Psoas muscle (tissue), 8 donors: ENCODE measurements at regions of chr13 and their contacts with region 1.

Region 1: GRCh38 chr13:26985285-26985878 is 186.2 kb downstream of the USP12 start:
- DNase-seq: no peak
- ATAC-seq: peak; percentile 85 to 96 (median 88)
- H3K4me3 ChIP-seq: no peak overlapping the region
- H3K27ac ChIP-seq: no peak overlapping the region
- H3K4me1 ChIP-seq: no peaks in the 10 kb centered on the region
- H3K27me3 ChIP-seq: peaks cover 0 to 2% (median 0%) of the 10 kb centered on the region in 3 donors
- CTCF ChIP-seq: peak; percentile 86

Region 2: DNA sequence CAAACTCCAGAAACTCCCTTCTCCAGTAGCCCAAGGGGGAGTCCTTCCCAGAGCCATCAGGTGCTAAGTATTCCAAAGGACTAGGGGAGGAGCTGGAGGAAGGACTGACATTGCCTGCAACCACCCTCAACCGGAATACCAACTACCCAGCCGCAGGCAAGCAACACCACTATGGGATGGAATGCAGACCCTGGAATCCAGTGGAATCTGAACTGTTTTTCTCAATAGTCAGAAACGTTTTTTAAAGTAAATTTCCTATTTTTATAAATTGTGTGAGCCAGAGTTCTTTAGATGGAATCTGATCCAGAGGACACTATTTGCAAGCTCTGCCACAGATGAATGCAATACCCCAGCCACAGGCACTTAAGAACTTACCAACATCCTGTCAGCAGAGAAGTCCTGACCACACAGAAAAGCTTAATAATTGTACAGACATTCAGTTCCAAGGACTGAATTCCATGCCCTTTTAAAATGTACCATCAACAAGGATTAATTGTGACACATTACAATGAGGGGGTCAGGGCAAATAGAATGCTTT is 94.1 kb after region 1 on chr13:
- intact Hi-C with region 1: no loop called
- DNase-seq: no peak
- ATAC-seq: peak in 3 of 4 donors; percentile 19 to 68 (median 52)
- H3K4me3 ChIP-seq: no peak overlapping the region
- H3K27ac ChIP-seq: no peak overlapping the region
- H3K4me1 ChIP-seq: peaks cover 10% of the 10 kb centered on the region
- H3K27me3 ChIP-seq: no peaks in the 10 kb centered on the region
- CTCF ChIP-seq: no peak

Region 3: DNA sequence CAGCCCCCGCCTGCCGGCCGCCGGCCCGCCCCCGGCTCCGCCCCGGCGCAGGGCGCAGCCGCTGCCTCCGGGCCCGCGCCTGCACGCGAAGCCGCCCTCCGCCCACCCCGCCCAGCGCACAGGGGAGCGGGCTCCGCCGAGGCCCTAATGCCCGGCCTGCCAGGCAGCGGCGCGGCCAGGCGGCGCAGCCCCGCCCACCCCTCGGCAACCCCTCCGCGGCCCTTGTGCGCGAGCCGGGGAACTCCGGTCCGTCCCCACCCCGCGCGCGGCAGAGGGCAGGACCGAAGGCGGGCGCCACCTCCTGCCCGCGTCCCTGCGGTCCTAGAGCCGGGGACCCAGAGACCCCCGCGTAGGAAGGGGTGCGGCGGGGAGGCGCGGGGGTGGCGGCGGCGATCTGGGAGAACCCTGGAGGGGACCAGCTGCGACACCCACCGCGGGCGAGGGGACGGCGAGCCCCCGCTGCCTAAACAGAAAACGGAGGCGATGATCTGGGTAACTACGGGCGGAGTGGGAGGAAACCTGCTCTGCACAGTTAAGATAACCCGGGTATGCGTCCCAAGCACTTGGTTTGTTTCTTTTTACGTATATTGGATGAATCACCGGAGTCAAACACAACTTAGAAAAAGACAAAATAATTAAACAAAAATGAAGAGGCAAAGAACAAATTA is 186.6 kb after region 1 on chr13:
- intact Hi-C with region 1: loop called (anchors 5 to 10 kb)
- DNase-seq: peak; percentile 95 to 97
- ATAC-seq: peak; percentile 96 to 98 (median 97)
- H3K4me3 ChIP-seq: peak overlapping the region; percentile 86
- H3K27ac ChIP-seq: peak overlapping the region; percentile 90
- H3K4me1 ChIP-seq: peaks cover 31% of the 10 kb centered on the region
- H3K27me3 ChIP-seq: no peaks in the 10 kb centered on the region
- CTCF ChIP-seq: peak; percentile 18

Region 4: GRCh38 chr13:27203854-27204253 is 218.5 kb after region 1 on chr13:
- intact Hi-C with region 1: loop called (anchors 5 to 10 kb)
- DNase-seq: no peak
- ATAC-seq: peak in 1 of 4 donors; percentile 52
- H3K4me3 ChIP-seq: no peak overlapping the region
- H3K27ac ChIP-seq: no peak overlapping the region
- H3K4me1 ChIP-seq: no peaks in the 10 kb centered on the region
- H3K27me3 ChIP-seq: no peaks in the 10 kb centered on the region
- CTCF ChIP-seq: no peak

Region 5: DNA sequence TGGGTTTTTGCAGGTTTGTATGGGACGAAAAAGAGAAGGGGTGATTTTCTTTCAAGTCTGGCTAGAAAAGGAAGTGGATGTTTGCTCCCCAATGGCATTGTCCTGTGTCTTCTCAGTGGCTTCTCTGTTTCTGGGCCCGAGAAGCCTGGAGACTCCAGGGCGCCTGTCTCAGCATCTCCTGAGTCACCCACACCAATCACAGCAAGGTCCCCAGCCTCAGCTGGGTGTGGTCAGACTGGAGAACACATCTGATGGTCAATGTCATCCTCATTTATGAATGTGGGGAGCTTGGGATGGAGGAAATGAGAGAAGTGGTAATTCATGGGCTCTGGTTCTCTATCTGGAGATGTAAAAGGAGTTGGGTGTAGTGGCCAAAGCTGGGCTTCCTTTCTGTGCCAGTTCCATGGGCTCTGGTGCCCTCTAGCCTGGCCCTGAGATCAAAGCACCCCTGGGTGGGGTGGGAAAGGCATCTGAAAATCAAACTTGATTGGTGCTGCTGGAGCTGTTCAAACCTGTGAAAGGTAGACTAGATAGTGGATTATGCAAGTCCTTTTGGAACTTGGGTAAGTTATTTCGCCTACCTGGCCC is 298.6 kb after region 1 on chr13:
- intact Hi-C with region 1: loop called (anchors 5 to 10 kb)
- DNase-seq: no peak
- ATAC-seq: peak in 3 of 4 donors; percentile 36 to 53 (median 48)
- H3K4me3 ChIP-seq: no peak overlapping the region
- H3K27ac ChIP-seq: no peak overlapping the region
- H3K4me1 ChIP-seq: no peaks in the 10 kb centered on the region
- H3K27me3 ChIP-seq: peaks cover 0 to 3% (median 2%) of the 10 kb centered on the region in 3 donors
- CTCF ChIP-seq: peak; percentile 29

Region 6: DNA sequence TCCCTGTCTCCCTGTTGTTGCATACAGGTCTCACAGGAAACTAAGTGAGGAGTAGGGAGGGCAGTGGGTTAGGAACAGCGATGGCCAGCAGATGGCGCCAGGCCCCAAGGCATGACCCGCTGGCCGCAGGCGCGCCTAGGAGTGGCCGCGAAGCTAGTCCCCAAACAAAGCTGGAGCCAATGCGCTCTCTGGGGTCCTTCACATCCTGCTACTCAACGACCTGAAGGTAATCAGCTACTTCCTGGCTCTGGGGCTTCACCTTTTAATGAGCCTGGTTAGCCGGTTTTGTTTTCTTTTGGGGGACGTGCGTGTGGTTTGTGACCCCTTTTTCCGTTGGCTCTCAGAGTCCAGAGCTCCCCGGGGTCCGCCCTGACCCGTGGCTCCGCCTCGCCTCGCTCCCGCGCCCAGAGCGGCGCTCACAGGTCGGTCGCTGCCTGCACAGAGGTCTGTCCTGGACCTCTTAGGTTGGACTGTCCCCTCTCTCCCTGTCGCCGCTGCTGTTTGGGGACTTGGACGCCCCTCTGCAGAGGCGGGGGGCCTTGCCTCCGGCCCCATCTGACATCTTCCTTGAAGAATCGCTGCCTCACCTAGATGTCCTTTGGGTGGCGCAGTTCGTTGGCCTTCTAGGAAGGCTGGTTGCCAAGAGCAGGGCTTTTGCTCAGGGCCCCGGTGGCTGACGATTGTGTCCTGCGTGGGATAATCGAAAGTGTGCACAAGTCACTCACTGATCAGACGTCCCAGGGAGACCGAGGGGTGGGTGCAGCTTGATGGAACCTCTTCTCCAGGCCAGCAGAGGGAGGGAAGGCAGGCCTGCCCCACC is 376.9 kb after region 1 on chr13:
- intact Hi-C with region 1: loop called (anchors 1 to 2 kb)
- DNase-seq: peak; percentile 84 to 91
- ATAC-seq: peak; percentile 96 to 99 (median 96)
- H3K4me3 ChIP-seq: peak overlapping the region; percentile 60
- H3K27ac ChIP-seq: no peak overlapping the region
- H3K4me1 ChIP-seq: no peaks in the 10 kb centered on the region
- H3K27me3 ChIP-seq: peaks cover 0 to 18% (median 0%) of the 10 kb centered on the region in 3 donors
- CTCF ChIP-seq: peak; percentile 93

Region 7: GRCh38 chr13:27826379-27827353 is 841.3 kb after region 1 on chr13:
- intact Hi-C with region 1: loop called (anchors 5 to 10 kb)
- DNase-seq: peak; percentile 69 to 81
- ATAC-seq: peak; percentile 86 to 96 (median 92)
- H3K4me3 ChIP-seq: peak overlapping the region; percentile 23
- H3K27ac ChIP-seq: no peak overlapping the region
- H3K4me1 ChIP-seq: peaks cover 5% of the 10 kb centered on the region
- H3K27me3 ChIP-seq: peaks cover 1 to 42% (median 5%) of the 10 kb centered on the region in 3 donors
- CTCF ChIP-seq: peak; percentile 93

Region 8: DNA sequence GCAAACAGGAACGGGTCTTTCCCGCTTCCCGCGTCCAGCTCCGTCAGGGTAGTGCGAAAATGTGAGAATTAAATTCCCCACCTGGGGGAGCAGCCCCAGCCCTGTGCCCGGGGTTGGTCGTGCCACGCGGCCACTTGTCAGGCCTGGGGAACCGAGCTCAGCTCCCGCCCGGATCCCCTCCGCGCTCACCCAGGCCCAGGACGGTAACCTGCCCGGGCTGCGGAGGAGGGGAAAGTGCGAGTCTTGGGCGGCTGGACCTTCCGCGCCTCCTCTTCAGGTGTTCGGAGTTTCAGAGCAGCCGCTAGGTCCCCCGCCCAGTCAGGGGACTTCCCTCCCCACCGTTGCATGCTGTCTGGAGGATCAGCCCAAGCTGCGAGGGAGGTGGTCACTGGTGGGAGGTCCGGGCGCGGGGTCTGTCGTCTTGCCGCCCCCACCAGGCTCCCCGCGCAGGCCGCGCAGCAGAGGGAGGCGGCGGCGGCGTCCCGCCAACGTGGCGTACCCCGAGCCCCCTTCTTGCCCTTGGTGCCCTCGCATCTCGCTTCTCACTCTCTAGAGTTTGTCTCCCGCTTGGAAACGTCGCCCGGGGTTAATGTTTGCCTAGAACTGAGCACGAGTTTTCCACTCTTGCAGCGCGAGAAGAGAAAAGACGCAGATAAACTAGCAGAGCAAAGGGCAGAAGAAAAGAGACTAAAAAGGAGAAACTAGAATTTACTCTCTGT is 995.1 kb after region 1 on chr13:
- intact Hi-C with region 1: loop called (anchors 5 to 10 kb)
- DNase-seq: no peak
- ATAC-seq: no peak
- H3K4me3 ChIP-seq: no peak overlapping the region
- H3K27ac ChIP-seq: no peak overlapping the region
- H3K4me1 ChIP-seq: no peaks in the 10 kb centered on the region
- H3K27me3 ChIP-seq: peaks cover 2 to 84% (median 43%) of the 10 kb centered on the region in 3 donors
- CTCF ChIP-seq: no peak